Right ventricle myocardium superior (tissue), 1 donor: ENCODE measurements at regions of chr4 and their contacts with region 1.

Region 1: DNA sequence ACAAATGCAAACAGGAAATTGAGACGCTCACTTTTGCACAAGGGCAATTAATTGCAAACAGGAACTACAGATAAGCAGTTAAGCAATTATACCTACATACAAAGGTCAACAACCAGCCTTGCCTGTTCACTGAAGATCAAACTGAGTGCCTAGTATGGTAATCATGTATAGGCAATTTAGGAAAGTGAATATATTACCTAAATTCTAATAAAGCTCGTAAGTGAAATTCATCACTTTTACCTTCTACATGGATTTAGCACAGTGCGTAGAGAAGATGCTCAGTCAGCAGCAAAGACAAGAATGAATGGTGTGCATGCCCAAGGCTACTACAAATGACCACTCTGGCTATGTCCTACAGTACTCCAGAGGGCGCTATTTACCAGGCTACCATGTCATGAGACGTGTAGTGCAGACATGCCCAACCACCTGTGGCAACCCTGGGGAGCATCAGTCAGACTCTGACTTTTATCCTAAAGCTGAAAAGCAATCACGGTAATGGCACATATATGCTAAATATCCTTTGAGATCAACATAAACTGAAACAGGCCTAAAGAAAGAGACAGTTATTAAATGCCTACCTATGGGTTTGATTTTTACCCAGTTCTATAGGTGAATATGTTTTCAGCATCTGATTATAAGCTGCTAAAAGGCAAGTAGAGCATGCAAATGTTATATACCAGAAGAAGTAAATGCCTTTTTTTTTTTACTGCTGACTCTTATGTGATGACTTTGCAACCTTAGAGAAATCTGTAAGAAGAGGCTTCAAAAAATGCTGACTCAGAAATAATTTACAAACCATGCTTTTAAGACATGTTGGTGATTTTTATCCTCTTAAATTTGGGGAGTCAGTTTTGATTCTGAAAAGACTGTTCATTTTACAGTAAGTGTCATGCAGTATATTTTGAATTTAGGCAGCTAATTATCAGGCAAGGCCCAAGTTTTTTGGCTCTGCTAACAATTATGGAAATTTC is 178.0 kb downstream of the PPP3CA start:
- DNase-seq: peak; percentile 42
- ATAC-seq: peak; percentile 98

Region 2: GRCh38 chr4:101295691-101296090 is 126.4 kb after region 1 on chr4:
- intact Hi-C with region 1: no loop called
- DNase-seq: no peak
- ATAC-seq: peak; percentile 18

Region 3: GRCh38 chr4:101649790-101650515 is 480.6 kb after region 1 on chr4:
- intact Hi-C with region 1: loop called (anchors 10 kb)
- DNase-seq: no peak
- ATAC-seq: peak; percentile 58

Region 4: DNA sequence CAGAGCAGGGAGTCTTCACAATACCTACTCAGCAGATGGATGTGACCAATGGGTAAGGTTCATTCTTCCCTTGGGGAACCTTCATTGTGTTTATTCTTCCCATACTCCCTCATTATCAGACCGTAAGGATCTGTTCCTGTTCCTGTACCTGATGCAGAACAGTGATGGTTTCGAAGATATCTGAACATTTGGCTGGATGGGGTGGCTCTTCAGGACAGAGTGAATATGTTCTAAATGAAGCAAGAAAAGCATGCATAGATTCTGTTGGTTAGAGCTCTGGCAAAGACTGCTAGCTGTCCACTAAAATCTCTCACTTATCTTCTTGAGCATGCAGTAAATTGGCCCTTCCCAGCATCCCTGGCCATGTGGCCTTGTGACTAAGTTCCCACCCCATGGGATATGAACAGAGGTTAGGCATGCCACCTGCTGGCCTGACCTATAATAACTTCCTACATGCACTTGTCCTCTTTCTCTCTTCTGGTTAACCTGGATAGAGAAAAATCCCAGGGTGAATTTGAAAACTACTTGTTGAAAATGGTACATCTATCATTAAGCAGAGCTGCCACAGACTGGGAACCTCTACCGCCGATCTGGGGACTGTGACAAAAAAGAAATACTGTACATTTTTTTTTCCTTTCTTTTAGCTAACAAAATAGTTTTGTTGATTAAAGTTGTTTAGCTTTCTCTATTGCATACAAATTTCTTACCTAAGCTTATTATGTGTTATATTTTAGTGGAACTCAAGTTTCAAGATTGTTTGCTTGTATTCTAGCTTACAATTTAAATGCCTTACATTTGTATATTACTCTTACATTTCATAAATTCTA is 561.2 kb after region 1 on chr4:
- intact Hi-C with region 1: loop called (anchors 5 kb)
- DNase-seq: peak; percentile 61
- ATAC-seq: peak; percentile 88